ENCODE measurements at regions of chr7 and their contacts with region 1.

Region 1: DNA sequence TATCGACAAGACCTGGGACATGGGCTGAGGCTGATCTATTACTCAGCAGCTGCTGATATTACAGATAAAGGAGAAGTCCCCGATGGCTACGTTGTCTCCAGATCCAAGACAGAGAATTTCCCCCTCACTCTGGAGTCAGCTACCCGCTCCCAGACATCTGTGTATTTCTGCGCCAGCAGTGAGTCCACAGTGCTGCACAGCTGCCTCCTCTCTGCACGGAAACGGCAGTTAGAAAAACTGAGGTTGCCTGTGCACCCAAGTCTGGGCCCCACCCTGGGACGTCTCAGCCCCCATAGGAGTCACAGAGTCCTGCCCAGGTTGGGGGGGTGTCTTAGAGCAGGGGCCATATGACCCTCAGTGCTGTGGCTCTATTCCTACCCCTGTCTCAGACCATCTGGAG is 167.4 kb upstream of the PRSS58 start:
- DNase-seq: no peak
- ATAC-seq: no peak
- H3K4me3 ChIP-seq: no peak overlapping the region
- H3K27ac ChIP-seq: no peak overlapping the region
- H3K4me1 ChIP-seq: no peaks in the 10 kb centered on the region
- H3K27me3 ChIP-seq: no peaks in the 10 kb centered on the region

Region 2: GRCh38 chr7:142454862-142455261 is 29.6 kb after region 1 on chr7:
- intact Hi-C with region 1: loop called in 1 of 4 experiments (anchors 2 kb)
- DNase-seq: no peak
- ATAC-seq: no peak
- H3K4me3 ChIP-seq: no peak overlapping the region
- H3K27ac ChIP-seq: no peak overlapping the region
- H3K4me1 ChIP-seq: no peaks in the 10 kb centered on the region
- H3K27me3 ChIP-seq: no peaks in the 10 kb centered on the region

Measured in right cardiac atrium (tissue), 5 donors.